ENCODE measurements at regions of chr10 and their contacts with region 1.

Region 1: GRCh38 chr10:80444646-80445319 is 9.3 kb upstream of the TSPAN14 start:
- DNase-seq: peak; percentile 70
- H3K4me3 ChIP-seq: no peak overlapping the region
- H3K27ac ChIP-seq: no peak overlapping the region
- H3K4me1 ChIP-seq: peaks cover 22% of the 10 kb centered on the region
- H3K27me3 ChIP-seq: no peaks in the 10 kb centered on the region
- CTCF ChIP-seq: peak; percentile 80 to 87
- POLR2A ChIP-seq: no peak

Region 2: GRCh38 chr10:80372675-80373074 is 72.1 kb before region 1 on chr10:
- CTCF ChIA-PET with region 1: no interaction called
- POLR2A ChIA-PET with region 1: no interaction called
- dilution Hi-C with region 1: no loop called
- intact Hi-C with region 1: no loop called
- DNase-seq: no peak
- H3K4me3 ChIP-seq: no peak overlapping the region
- H3K27ac ChIP-seq: no peak overlapping the region
- H3K4me1 ChIP-seq: no peaks in the 10 kb centered on the region
- H3K27me3 ChIP-seq: peaks cover 6 to 7% of the 10 kb centered on the region in 2 experiments
- CTCF ChIP-seq: no peak
- POLR2A ChIP-seq: no peak

Region 3: GRCh38 chr10:80389809-80390208 is 55.0 kb before region 1 on chr10:
- CTCF ChIA-PET with region 1: interaction called, 20 read pairs
- POLR2A ChIA-PET with region 1: no interaction called
- dilution Hi-C with region 1: no loop called
- intact Hi-C with region 1: no loop called
- DNase-seq: no peak
- H3K4me3 ChIP-seq: no peak overlapping the region
- H3K27ac ChIP-seq: no peak overlapping the region
- H3K4me1 ChIP-seq: peaks cover 9% of the 10 kb centered on the region
- H3K27me3 ChIP-seq: no peaks in the 10 kb centered on the region
- CTCF ChIP-seq: no peak
- POLR2A ChIP-seq: no peak

Region 4: GRCh38 chr10:80464557-80465450 is 20.0 kb after region 1 on chr10:
- CTCF ChIA-PET with region 1: interaction called, 18 read pairs
- POLR2A ChIA-PET with region 1: no interaction called
- dilution Hi-C with region 1: no loop called
- intact Hi-C with region 1: no loop called
- DNase-seq: peak; percentile 78
- H3K4me3 ChIP-seq: peak overlapping the region in 2 of 3 experiments; percentile 13 to 23
- H3K27ac ChIP-seq: peak overlapping the region; percentile 79
- H3K4me1 ChIP-seq: peaks cover 97% of the 10 kb centered on the region
- H3K27me3 ChIP-seq: no peaks in the 10 kb centered on the region
- CTCF ChIP-seq: no peak
- POLR2A ChIP-seq: peak; percentile 37

Region 5: GRCh38 chr10:80509403-80510161 is 64.8 kb after region 1 on chr10:
- CTCF ChIA-PET with region 1: interaction called, 1,118 read pairs
- POLR2A ChIA-PET with region 1: interaction called, 4 read pairs
- dilution Hi-C with region 1: no loop called
- intact Hi-C with region 1: loop called (anchors 1 kb)
- DNase-seq: peak; percentile 98
- H3K4me3 ChIP-seq: no peak overlapping the region
- H3K27ac ChIP-seq: peak overlapping the region; percentile 90
- H3K4me1 ChIP-seq: peaks cover 65% of the 10 kb centered on the region
- H3K27me3 ChIP-seq: no peaks in the 10 kb centered on the region
- CTCF ChIP-seq: no peak
- POLR2A ChIP-seq: peak; percentile 49

Region 6: DNA sequence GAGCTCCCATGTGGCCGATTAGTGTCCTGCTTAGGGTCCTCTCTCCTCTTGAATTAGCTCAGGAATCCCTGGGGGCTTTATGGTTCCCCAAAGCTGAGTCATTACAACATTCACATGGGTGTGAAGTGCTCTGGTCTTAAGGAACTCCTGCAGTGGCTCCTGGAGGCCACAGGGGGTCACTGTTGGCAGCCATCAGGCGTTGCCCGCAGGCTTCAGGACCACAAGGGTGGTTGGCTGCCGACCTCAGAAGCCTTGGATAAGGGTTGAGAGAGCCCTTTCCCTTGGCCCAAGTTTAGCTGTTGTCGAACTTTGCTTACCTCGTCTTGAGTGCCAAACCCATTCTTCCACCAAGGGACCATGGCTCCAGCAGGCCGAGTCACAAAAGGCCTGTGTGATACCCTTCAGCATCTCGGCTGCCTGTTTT is 154.7 kb after region 1 on chr10:
- CTCF ChIA-PET with region 1: interaction called, 20 read pairs
- POLR2A ChIA-PET with region 1: no interaction called
- dilution Hi-C with region 1: no loop called
- intact Hi-C with region 1: loop called (anchors 1 kb)
- DNase-seq: peak; percentile 62
- H3K4me3 ChIP-seq: no peak overlapping the region
- H3K27ac ChIP-seq: no peak overlapping the region
- H3K4me1 ChIP-seq: no peaks in the 10 kb centered on the region
- H3K27me3 ChIP-seq: no peaks in the 10 kb centered on the region
- CTCF ChIP-seq: peak; percentile 73 to 86
- POLR2A ChIP-seq: no peak

Region 7: GRCh38 chr10:80924063-80924952 is 479.5 kb after region 1 on chr10:
- CTCF ChIA-PET with region 1: interaction called, 51 read pairs
- POLR2A ChIA-PET with region 1: interaction called, 3 read pairs
- dilution Hi-C with region 1: no loop called
- intact Hi-C with region 1: loop called (anchors 1 kb)
- DNase-seq: peak; percentile 56
- H3K4me3 ChIP-seq: no peak overlapping the region
- H3K27ac ChIP-seq: no peak overlapping the region
- H3K4me1 ChIP-seq: no peaks in the 10 kb centered on the region
- H3K27me3 ChIP-seq: peaks cover 0 to 4% of the 10 kb centered on the region in 2 experiments
- CTCF ChIP-seq: peak; percentile 46 to 63
- POLR2A ChIP-seq: no peak

Measured in endothelial cell of umbilical vein (primary cell).